B cell (primary cell): ENCODE measurements at regions of chr10 and their contacts with region 1.

Region 1: DNA sequence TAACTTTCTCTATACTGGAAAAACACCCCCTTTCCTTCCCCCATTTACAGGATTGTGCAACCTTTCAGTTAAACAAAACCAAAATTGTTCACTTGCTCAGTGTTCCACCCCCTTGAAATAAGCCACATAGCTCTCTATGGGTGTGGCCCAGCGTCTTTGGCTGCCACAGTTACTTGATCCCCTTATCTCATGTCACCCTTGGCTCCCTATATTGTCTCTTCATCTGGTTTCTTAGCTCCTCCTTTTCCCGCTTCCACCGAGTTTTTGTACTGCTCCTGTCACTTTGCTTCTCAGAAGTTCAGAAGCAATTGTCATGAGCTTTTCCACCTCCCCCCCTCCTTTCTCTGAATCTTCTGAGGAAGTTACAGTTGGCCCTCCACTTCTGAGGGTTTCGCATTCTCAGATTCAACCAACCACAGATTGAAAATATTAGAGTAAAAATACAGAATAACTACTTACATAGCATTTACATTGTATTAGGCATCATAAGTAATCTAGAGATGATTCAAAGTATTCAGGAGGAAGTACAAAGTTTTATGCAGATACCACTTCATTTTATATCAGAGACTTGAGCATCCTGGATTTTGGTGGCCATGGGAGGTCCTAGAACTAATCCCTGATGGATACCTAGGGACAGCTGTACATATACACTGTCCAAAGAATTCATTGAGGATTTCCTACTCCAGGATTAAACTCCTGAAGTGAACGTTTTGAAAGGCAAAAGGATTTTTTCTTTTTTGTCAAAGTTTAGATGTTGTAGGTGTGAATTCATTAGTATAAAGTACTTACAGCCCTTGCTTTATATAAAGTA is 60.4 kb downstream of the ADD3 start:
- DNase-seq: peak; percentile 64
- ATAC-seq: peak; percentile 60
- H3K4me3 ChIP-seq: peak overlapping the region in 3 of 5 experiments; percentile 3 to 55 (median 4)
- H3K4me3 Mint-ChIP-seq: peak overlapping the region; percentile 80
- H3K27ac ChIP-seq: peak overlapping the region; percentile 81 to 84
- H3K27ac Mint-ChIP-seq: peak overlapping the region; percentile 96
- H3K4me1 ChIP-seq: peaks cover 64 to 77% of the 10 kb centered on the region in 2 donors
- H3K4me1 Mint-ChIP-seq: peaks cover 77% of the 10 kb centered on the region
- H3K27me3 ChIP-seq: no peaks in the 10 kb centered on the region
- H3K27me3 Mint-ChIP-seq: no peaks in the 10 kb centered on the region
- CTCF ChIP-seq: no peak

Region 2: DNA sequence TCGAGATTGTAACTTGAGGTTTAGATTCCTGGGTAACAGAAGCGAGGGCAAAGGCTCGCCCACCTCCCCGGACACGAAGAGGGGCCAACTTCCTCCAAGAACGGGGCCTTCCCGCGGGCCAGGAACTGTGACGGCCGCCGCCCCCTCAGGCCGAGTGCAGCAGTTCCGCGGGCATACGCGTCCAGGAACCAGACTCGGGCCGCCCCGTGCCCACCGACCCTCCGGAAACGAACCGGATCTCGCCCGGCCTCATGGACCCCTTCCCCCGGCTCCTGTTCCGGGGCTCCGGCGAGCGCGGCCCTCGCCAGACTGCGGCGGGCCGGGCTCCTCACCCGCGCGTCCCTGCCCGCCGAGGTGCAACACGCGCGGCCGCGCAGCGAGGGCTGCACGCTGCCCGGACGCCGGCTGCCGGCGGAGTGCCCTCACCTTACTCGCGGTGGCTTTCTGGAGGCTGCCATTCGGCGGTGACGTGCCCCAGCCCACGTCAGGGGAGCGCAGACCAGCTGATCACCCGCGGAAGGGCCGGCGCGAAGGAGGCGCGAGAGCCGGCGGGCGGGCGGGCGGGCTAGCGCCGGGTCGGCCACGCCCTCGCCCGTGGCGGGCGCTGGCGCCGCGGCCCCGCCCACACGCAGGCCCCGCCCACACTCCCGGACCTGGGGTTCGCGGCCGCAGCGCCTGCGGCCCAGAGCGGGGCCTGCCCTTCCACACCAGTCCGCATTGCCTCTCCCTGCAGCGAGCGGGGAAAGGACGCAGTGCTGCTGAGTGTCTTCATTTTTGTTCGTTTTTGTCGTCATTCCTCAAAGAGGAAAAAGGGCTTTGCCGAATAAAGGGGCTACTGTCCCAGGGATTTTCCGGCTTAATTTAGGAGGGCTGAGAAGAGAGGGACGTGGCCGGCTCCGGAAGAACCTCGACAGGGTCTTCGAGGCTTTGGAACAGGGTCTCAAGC is 144.9 kb before region 1 on chr10 and contains the start of gene XPNPEP1:
- CTCF ChIA-PET with region 1: no interaction called
- POLR2A ChIA-PET with region 1: no interaction called
- intact Hi-C with region 1: loop called (anchors 5 kb)
- DNase-seq: peak; percentile 92
- ATAC-seq: peak; percentile 96
- H3K4me3 ChIP-seq: peak within 1 kb of the TSS; percentile 55 to 91 (median 75)
- H3K4me3 Mint-ChIP-seq: peak within 1 kb of the TSS; percentile 90
- H3K27ac ChIP-seq: peak within 1 kb of the TSS; percentile 60 to 81
- H3K27ac Mint-ChIP-seq: peak within 1 kb of the TSS; percentile 88
- H3K4me1 ChIP-seq: peaks cover 18 to 23% of the 10 kb centered on the region in 2 donors
- H3K4me1 Mint-ChIP-seq: peaks cover 39% of the 10 kb centered on the region
- H3K27me3 ChIP-seq: no peaks in the 10 kb centered on the region
- H3K27me3 Mint-ChIP-seq: no peaks in the 10 kb centered on the region
- CTCF ChIP-seq: no peak
- total RNA-seq, gene XPNPEP1: 56.1 and 60.6 TPM in 2 replicates

Region 3: DNA sequence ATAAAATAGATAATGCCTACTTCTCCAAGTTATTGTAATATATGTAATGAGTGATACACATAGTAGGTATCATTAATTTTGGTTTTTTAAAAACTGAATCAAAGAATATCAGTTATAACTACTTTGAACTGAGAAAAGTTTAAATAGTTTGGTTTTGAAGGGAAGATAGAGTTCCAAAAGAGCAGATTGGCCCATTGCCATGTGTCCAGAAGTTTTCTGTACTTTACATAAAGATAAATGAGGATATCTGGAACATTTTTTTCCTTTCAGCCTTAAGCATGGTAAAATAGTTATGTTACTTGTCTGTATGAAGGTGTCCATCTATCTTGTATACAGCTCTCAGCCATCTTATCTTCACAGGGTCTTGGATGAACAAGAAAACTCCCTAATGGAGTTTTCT is 41.3 kb after region 1 on chr10:
- CTCF ChIA-PET with region 1: interaction called, 4 read pairs
- POLR2A ChIA-PET with region 1: no interaction called
- intact Hi-C with region 1: loop called (anchors 5 kb)
- DNase-seq: no peak
- ATAC-seq: no peak
- H3K4me3 ChIP-seq: no peak overlapping the region
- H3K4me3 Mint-ChIP-seq: no peak overlapping the region
- H3K27ac ChIP-seq: no peak overlapping the region
- H3K27ac Mint-ChIP-seq: no peak overlapping the region
- H3K4me1 ChIP-seq: peaks cover 3 to 4% of the 10 kb centered on the region in 2 donors
- H3K4me1 Mint-ChIP-seq: peaks cover 15% of the 10 kb centered on the region
- H3K27me3 ChIP-seq: no peaks in the 10 kb centered on the region
- H3K27me3 Mint-ChIP-seq: no peaks in the 10 kb centered on the region
- CTCF ChIP-seq: no peak

Region 4: GRCh38 chr10:111493024-111493625 is 1425.0 kb after region 1 on chr10:
- CTCF ChIA-PET with region 1: no interaction called
- POLR2A ChIA-PET with region 1: no interaction called
- intact Hi-C with region 1: no loop called
- DNase-seq: no peak
- ATAC-seq: no peak
- H3K4me3 ChIP-seq: no peak overlapping the region
- H3K4me3 Mint-ChIP-seq: no peak overlapping the region
- H3K27ac ChIP-seq: no peak overlapping the region
- H3K27ac Mint-ChIP-seq: no peak overlapping the region
- H3K4me1 ChIP-seq: no peaks in the 10 kb centered on the region
- H3K4me1 Mint-ChIP-seq: no peaks in the 10 kb centered on the region
- H3K27me3 ChIP-seq: peaks cover 0 to 5% (median 0%) of the 10 kb centered on the region in 4 experiments
- H3K27me3 Mint-ChIP-seq: peaks cover 14% of the 10 kb centered on the region
- CTCF ChIP-seq: no peak